ENCODE measurements at regions of chr1 and their contacts with region 1.

Region 1: DNA sequence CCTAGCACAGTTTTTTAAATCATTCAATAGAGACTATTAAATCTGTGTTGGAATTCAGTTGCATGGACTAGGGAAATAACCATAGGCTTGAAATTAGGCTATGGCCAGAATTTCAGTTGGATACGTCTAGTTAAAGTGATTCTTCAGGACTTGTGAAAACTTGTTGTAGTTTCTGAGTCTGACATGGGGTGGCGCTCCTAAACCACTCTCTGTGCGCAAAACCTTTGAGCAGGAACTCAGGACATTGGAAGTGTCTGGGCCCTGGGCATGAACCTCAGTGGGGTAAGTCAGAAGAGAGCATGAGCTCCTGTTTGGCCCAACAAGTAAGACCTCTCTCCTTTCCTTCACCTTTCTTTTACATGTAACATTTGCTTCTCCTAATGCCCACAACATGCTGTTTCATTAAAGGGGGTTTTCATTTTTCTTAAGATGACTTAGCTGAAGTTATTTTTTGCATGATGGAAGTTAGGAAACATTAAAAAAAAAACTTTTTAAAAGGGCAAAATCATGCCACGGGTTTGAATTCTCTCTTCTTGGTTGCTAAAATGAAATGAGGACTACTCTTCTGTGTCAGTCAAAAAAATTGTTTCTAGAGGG is 17.1 kb upstream of the CCDC190 start:
- DNase-seq: peak; percentile 33
- H3K4me3 ChIP-seq: no peak overlapping the region; a peak in 1 of 4 replicates
- H3K27ac ChIP-seq: peak overlapping the region; percentile 60 to 87
- H3K4me1 ChIP-seq: peaks cover 19 to 24% of the 10 kb centered on the region in 2 experiments
- H3K27me3 ChIP-seq: no peaks in the 10 kb centered on the region
- CTCF ChIP-seq: peak; percentile 91
- EP300 ChIP-seq: no peak
- RAD21 ChIP-seq: peak; percentile 100

Region 2: GRCh38 chr1:162854245-162854882 is 23.7 kb before region 1 on chr1:
- CTCF ChIA-PET with region 1: interaction called, 15 read pairs
- POLR2A ChIA-PET with region 1: interaction called, 3 read pairs
- DNase-seq: peak; percentile 66
- H3K4me3 ChIP-seq: no peak overlapping the region; a peak in 1 of 4 replicates
- H3K27ac ChIP-seq: peak overlapping the region; percentile 58 to 92; a peak in 3 of 4 replicates
- H3K4me1 ChIP-seq: peaks cover 8 to 43% of the 10 kb centered on the region in 2 experiments; a peak in 3 of 4 replicates
- H3K27me3 ChIP-seq: no peaks in the 10 kb centered on the region
- CTCF ChIP-seq: peak; percentile 94
- EP300 ChIP-seq: no peak
- RAD21 ChIP-seq: peak; percentile 85

Region 3: DNA sequence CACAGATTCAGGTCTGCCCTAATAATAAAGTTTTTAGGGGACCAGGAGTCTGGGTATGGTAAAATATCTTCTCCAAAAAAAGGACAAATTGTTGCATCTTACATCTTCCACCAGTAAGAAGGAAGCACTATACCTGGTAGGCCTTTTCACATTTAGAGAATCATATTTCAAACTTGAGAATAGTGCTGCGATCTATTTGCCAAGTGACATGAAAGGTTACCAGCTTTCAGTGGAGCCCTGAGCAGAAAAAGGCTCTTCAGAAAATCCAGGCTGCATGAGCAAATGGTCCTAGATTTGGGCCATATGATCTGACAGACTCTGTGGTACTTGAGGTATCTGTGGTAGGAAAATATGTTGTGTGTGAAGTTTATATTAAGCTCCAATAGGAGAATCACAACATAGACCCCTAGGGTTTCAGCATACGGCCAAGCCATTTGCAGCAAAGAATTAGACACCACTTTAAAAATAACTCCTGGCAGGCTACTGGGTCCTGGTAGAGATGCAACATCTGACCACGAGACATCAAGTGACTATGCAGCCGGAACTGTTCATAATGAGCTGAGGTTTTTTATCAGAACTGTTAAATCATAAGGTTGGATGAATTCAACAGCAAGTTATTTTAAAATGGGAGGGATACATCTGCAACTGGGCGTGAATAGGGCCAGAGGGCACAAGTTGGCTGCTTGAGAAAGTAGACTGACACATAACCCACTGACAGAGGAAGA is 21.5 kb after region 1 on chr1:
- CTCF ChIA-PET with region 1: interaction called, 5 read pairs
- POLR2A ChIA-PET with region 1: interaction called, 10 read pairs
- DNase-seq: no peak
- H3K4me3 ChIP-seq: no peak overlapping the region
- H3K27ac ChIP-seq: peak overlapping the region; percentile 89 to 90
- H3K4me1 ChIP-seq: peaks cover 25 to 28% of the 10 kb centered on the region in 2 experiments
- H3K27me3 ChIP-seq: no peaks in the 10 kb centered on the region
- CTCF ChIP-seq: no peak
- EP300 ChIP-seq: peak in 1 of 2 experiments; percentile 87; a peak in 3 of 4 replicates
- RAD21 ChIP-seq: no peak

Region 4: GRCh38 chr1:162930976-162931560 is 53.0 kb after region 1 on chr1:
- CTCF ChIA-PET with region 1: interaction called, 9 read pairs
- POLR2A ChIA-PET with region 1: interaction called, 49 read pairs
- DNase-seq: no peak
- H3K4me3 ChIP-seq: no peak overlapping the region
- H3K27ac ChIP-seq: peak overlapping the region; percentile 9 to 99; a peak in 3 of 4 replicates
- H3K4me1 ChIP-seq: peaks cover 0 to 53% of the 10 kb centered on the region in 2 experiments; a peak in 2 of 4 replicates
- H3K27me3 ChIP-seq: no peaks in the 10 kb centered on the region
- CTCF ChIP-seq: no peak
- EP300 ChIP-seq: peak in 1 of 2 experiments; percentile 34; a peak in 1 of 4 replicates
- RAD21 ChIP-seq: no peak

Region 5: GRCh38 chr1:163076981-163077761 is 199.1 kb after region 1 on chr1:
- CTCF ChIA-PET with region 1: interaction called, 120 read pairs
- POLR2A ChIA-PET with region 1: interaction called, 450 read pairs
- DNase-seq: no peak
- H3K4me3 ChIP-seq: no peak overlapping the region; a peak in 1 of 4 replicates
- H3K27ac ChIP-seq: peak overlapping the region; percentile 91 to 99
- H3K4me1 ChIP-seq: peaks cover 23 to 29% of the 10 kb centered on the region in 2 experiments; a peak in 3 of 4 replicates
- H3K27me3 ChIP-seq: no peaks in the 10 kb centered on the region
- CTCF ChIP-seq: no peak
- EP300 ChIP-seq: no peak
- RAD21 ChIP-seq: no peak

Region 6: DNA sequence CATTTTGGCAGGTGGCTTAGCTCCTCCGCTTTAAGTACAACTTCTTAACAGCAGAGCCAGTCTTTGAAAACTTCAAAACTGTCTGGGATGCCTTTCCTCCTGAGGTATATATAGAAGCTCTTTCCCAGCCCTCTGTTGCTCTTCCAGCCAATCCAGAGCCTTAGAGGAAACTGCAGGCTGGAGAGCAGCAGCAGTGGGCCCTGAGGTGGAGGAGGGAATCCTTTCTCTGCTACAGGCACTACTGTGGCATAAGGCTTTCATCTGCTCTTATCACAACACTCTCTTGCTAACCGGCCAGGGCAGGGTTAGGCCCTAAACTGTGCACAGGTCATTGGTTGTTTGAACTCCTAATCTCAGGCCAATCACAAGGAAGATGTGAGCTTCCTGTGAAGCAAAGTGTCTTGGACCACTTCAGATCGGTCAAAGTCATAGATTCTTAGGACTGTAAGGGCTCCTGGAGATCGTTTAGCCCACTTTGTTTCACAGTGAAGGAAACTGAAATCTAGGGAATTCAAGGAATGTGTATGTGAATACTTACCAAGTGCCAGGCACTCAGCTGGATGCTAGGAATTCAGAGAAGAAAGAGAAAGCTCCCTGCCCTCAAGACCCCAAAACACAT is 324.8 kb after region 1 on chr1 and contains the start of gene RGS5:
- CTCF ChIA-PET with region 1: interaction called, 3 read pairs
- POLR2A ChIA-PET with region 1: interaction called, 46 read pairs
- DNase-seq: peak; percentile 73
- H3K4me3 ChIP-seq: peak within 1 kb of the TSS; percentile 62 to 66
- H3K27ac ChIP-seq: peak within 1 kb of the TSS; percentile 77 to 99
- H3K4me1 ChIP-seq: peaks cover 18 to 25% of the 10 kb centered on the region in 2 experiments; a peak in 3 of 4 replicates
- H3K27me3 ChIP-seq: no peaks in the 10 kb centered on the region
- CTCF ChIP-seq: no peak
- EP300 ChIP-seq: peak in 1 of 2 experiments; percentile 44; a peak in 2 of 4 replicates
- RAD21 ChIP-seq: no peak; the same call in 1 of the 2 replicates
- polyA plus RNA-seq, gene RGS5: 260 and 290 TPM in 2 replicates

Measured in SK-N-SH (cell line).